Endothelial cell of umbilical vein (primary cell): ENCODE measurements at regions of chr2 and their contacts with region 1.

Region 1: GRCh38 chr2:169012812-169013627 is 18.1 kb downstream of the ABCB11 start:
- DNase-seq: peak; percentile 88
- H3K4me3 ChIP-seq: no peak overlapping the region
- H3K27ac ChIP-seq: peak overlapping the region; percentile 88
- H3K4me1 ChIP-seq: peaks cover 28% of the 10 kb centered on the region
- H3K27me3 ChIP-seq: no peaks in the 10 kb centered on the region
- CTCF ChIP-seq: no peak
- POLR2A ChIP-seq: no peak

Region 2: DNA sequence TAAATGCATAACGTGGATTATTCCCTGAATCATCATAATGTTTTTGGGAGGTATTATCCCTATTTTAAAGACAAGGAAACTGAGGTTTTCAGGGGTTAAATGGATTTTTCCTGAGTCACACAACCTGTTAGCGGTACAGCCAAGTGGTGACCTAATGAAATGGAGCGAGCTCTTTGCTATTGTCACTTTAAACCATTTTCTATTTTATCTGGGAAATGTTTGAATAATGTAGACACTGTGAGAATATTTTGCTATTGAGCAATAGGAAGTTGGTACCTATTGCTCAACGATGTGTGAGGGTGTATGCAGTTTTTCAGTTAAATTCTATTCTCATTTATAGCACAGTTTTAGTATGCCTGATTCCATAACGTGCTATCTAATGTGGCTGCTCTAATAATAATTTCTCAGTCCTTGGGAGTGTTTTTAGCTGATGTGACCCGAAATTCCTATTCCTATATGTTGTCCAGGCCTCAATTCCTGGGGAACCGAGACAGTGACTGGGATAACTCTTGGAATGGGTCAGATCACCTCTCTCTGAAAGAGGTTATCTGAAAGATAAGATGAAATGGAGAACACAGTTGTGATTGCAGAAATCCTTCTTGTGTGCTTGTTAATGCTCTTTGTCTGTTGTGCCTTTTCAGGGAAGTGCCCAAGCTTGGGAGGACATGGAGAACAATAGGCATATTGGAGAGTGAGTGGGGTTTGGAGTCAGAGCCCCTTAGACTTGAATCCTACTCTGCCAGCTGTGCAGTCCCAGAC is 20.2 kb before region 1 on chr2:
- CTCF ChIA-PET with region 1: interaction called, 4 read pairs
- POLR2A ChIA-PET with region 1: no interaction called
- dilution Hi-C with region 1: no loop called
- intact Hi-C with region 1: loop called (anchors 1 kb)
- DNase-seq: peak; percentile 73
- H3K4me3 ChIP-seq: no peak overlapping the region
- H3K27ac ChIP-seq: peak overlapping the region; percentile 90
- H3K4me1 ChIP-seq: peaks cover 63% of the 10 kb centered on the region
- H3K27me3 ChIP-seq: no peaks in the 10 kb centered on the region
- CTCF ChIP-seq: no peak
- POLR2A ChIP-seq: no peak

Region 3: DNA sequence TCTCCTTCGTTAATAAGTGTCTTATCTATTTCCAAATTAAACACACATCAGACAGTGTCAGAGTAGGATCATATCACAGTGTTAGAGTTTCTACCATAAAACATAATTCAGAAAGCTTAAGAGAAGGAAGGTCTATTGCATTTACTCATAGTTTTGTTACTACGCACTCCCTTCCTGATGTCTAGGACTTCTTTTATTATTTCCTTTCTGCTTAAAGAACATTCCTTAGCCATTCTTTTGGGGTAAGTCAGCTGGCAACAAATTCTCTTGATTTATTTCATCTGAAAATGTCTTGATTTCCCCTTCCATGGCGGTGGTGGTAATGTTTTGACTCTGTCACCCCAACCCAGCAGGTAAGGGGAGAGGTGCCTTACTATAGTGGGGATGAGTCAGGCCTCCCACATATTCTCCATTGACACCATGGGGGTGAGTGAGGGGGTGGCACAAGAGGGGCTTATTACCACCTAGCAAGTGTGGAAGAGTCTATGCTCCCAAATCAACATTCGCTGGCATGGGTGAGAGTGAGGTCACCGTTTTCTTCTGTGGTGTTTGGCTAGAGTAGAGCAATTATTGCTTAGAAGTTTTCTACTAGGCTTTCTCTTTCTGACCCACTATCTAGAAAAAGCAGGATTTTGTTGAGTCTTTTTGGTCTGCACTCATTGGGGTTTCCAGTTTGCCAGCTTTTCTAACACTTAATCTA is 11.8 kb before region 1 on chr2:
- CTCF ChIA-PET with region 1: interaction called, 3 read pairs
- POLR2A ChIA-PET with region 1: no interaction called
- dilution Hi-C with region 1: no loop called
- intact Hi-C with region 1: loop called (anchors 1 kb)
- DNase-seq: peak; percentile 88
- H3K4me3 ChIP-seq: peak overlapping the region in 1 of 3 experiments; percentile 43
- H3K27ac ChIP-seq: peak overlapping the region; percentile 100
- H3K4me1 ChIP-seq: peaks cover 66% of the 10 kb centered on the region
- H3K27me3 ChIP-seq: no peaks in the 10 kb centered on the region
- CTCF ChIP-seq: no peak
- POLR2A ChIP-seq: no peak

Region 4: GRCh38 chr2:169026056-169026455 is 13.0 kb after region 1 on chr2:
- CTCF ChIA-PET with region 1: no interaction called
- POLR2A ChIA-PET with region 1: no interaction called
- dilution Hi-C with region 1: no loop called
- intact Hi-C with region 1: no loop called
- DNase-seq: no peak
- H3K4me3 ChIP-seq: no peak overlapping the region
- H3K27ac ChIP-seq: no peak overlapping the region
- H3K4me1 ChIP-seq: no peaks in the 10 kb centered on the region
- H3K27me3 ChIP-seq: no peaks in the 10 kb centered on the region
- CTCF ChIP-seq: no peak
- POLR2A ChIP-seq: no peak